ENCODE measurements at regions of chr14 and their contacts with region 1.

Region 1: GRCh38 chr14:69505338-69506240 is 21.1 kb downstream of the PLEKHD1 start:
- DNase-seq: no peak
- ATAC-seq: no peak
- H3K4me3 ChIP-seq: no peak overlapping the region
- H3K4me3 Mint-ChIP-seq: no peak overlapping the region
- H3K27ac ChIP-seq: no peak overlapping the region
- H3K27ac Mint-ChIP-seq: no peak overlapping the region
- H3K4me1 ChIP-seq: no peaks in the 10 kb centered on the region
- H3K4me1 Mint-ChIP-seq: no peaks in the 10 kb centered on the region
- H3K27me3 ChIP-seq: peaks cover 0 to 19% of the 10 kb centered on the region in 2 experiments
- H3K27me3 Mint-ChIP-seq: peaks cover 0 to 5% of the 10 kb centered on the region in 2 donors

Region 2: GRCh38 chr14:69038455-69039287 is 466.9 kb before region 1 on chr14:
- CTCF ChIA-PET with region 1: interaction called in 1 of 2 experiments, 15 read pairs
- POLR2A ChIA-PET with region 1: no interaction called
- DNase-seq: no peak
- ATAC-seq: no peak
- H3K4me3 ChIP-seq: no peak overlapping the region
- H3K4me3 Mint-ChIP-seq: no peak overlapping the region
- H3K27ac ChIP-seq: no peak overlapping the region
- H3K27ac Mint-ChIP-seq: no peak overlapping the region
- H3K4me1 ChIP-seq: no peaks in the 10 kb centered on the region
- H3K4me1 Mint-ChIP-seq: peaks cover 10 to 14% (median 12%) of the 10 kb centered on the region in 3 donors
- H3K27me3 ChIP-seq: peaks cover 0 to 33% of the 10 kb centered on the region in 2 experiments
- H3K27me3 Mint-ChIP-seq: peaks cover 31 to 44% of the 10 kb centered on the region in 2 donors

Region 3: GRCh38 chr14:69489495-69489894 is 16.1 kb before region 1 on chr14:
- CTCF ChIA-PET with region 1: no interaction called
- POLR2A ChIA-PET with region 1: interaction called in 1 of 2 experiments, 10 read pairs
- DNase-seq: no peak
- ATAC-seq: no peak
- H3K4me3 ChIP-seq: no peak overlapping the region
- H3K4me3 Mint-ChIP-seq: no peak overlapping the region
- H3K27ac ChIP-seq: no peak overlapping the region
- H3K27ac Mint-ChIP-seq: no peak overlapping the region
- H3K4me1 ChIP-seq: peaks cover 0 to 6% of the 10 kb centered on the region in 2 experiments
- H3K4me1 Mint-ChIP-seq: peaks cover 0 to 2% (median 0%) of the 10 kb centered on the region in 3 donors
- H3K27me3 ChIP-seq: peaks cover 0 to 38% of the 10 kb centered on the region in 2 experiments
- H3K27me3 Mint-ChIP-seq: peaks cover 29 to 34% of the 10 kb centered on the region in 2 donors

Region 4: DNA sequence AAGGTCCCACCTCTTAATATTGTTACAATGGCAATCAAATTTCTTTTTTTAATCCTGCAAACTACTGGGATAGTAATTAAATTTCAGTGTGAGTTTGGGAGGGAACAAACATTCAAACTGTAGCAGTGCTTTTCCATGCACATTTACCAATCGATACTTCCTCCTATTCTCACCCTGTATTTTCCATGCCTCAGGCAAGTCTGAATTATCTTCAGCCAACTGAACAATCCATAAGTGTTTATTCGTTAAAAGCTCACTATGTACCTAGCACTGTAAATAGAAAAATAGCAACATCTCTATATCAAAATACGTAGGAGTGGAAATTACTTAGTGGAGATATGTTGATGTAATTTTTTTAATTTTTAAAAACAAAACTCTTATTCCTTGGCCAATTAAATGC is 25.5 kb after region 1 on chr14:
- CTCF ChIA-PET with region 1: no interaction called
- POLR2A ChIA-PET with region 1: no interaction called
- DNase-seq: no peak
- ATAC-seq: no peak
- H3K4me3 ChIP-seq: no peak overlapping the region
- H3K4me3 Mint-ChIP-seq: no peak overlapping the region
- H3K27ac ChIP-seq: no peak overlapping the region
- H3K27ac Mint-ChIP-seq: no peak overlapping the region
- H3K4me1 ChIP-seq: no peaks in the 10 kb centered on the region
- H3K4me1 Mint-ChIP-seq: no peaks in the 10 kb centered on the region
- H3K27me3 ChIP-seq: peaks cover 0 to 30% of the 10 kb centered on the region in 2 experiments
- H3K27me3 Mint-ChIP-seq: peaks cover 18 to 26% of the 10 kb centered on the region in 2 donors